ENCODE measurements at regions of chr14 and their contacts with region 1.

Region 1: GRCh38 chr14:56059054-56059453 is 59.2 kb upstream of the PELI2 start:
- DNase-seq: no peak
- H3K4me3 ChIP-seq: peak overlapping the region in 3 of 59 donors; percentile 4 to 14 (median 6)
- H3K27ac ChIP-seq: no peak overlapping the region
- H3K27me3 ChIP-seq: no peaks in the 10 kb centered on the region
- CTCF ChIP-seq: no peak

Region 2: DNA sequence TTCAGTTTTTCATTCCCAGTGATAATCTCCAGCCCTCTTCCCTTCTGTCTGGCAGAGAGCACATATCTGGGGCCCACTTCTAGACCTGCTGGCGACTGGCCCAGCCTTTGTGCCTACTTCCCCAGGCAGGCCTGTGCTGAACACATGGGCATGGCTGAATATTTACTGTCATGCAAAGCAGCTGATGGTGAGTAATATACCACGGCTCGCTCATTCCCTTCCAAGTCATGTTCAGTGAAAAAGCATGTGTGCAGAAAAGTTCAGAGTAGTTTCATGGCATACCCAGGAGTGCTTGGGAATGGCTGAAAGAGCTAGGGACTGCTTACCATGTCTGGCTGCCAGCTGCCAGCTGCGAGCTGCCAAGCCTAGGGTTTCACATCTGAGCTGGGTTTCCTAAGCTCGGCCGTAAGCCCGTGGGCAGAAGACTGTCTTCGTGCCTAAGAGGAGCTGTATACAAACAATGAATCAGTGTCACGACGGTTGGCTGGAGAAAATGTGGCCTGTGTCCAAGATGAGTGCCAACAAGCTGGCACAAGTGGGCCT is 120.7 kb before region 1 on chr14:
- intact Hi-C with region 1: loop called in 1 of 2 experiments (anchors 5 kb)
- DNase-seq: peak; percentile 48 to 82 (median 73)
- H3K4me3 ChIP-seq: no peak overlapping the region
- H3K27ac ChIP-seq: peak overlapping the region in 17 of 59 donors; percentile 1 to 55 (median 12)
- H3K27me3 ChIP-seq: no peaks in the 10 kb centered on the region
- CTCF ChIP-seq: peak in 1 of 56 donors; percentile 7

Region 3: GRCh38 chr14:55976219-55976618 is 82.8 kb before region 1 on chr14:
- intact Hi-C with region 1: loop called in 1 of 2 experiments (anchors 10 kb)
- DNase-seq: no peak
- H3K4me3 ChIP-seq: no peak overlapping the region
- H3K27ac ChIP-seq: no peak overlapping the region
- H3K27me3 ChIP-seq: no peaks in the 10 kb centered on the region
- CTCF ChIP-seq: no peak

Region 4: DNA sequence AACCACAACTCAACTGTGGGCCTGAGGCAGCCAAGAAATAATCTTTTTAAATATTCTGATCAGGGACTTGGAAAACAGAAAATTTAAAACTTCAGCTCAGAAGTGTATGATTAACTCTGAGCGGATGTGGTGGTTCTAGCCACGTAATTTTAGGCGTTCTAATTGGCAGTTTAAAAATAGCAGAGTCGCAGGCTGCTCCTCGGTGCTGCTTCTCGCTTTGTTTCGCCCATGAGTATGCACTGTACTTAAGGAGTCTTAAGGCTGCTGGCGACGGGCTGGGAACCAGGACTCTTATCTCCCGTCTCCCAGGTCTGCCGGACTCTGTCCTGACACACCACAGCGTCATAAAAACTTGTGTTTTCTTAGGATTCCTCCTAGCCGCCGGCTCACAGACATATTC is 54.3 kb before region 1 on chr14:
- intact Hi-C with region 1: no loop called
- DNase-seq: no peak
- H3K4me3 ChIP-seq: peak overlapping the region in 41 of 59 donors; percentile 3 to 50 (median 27)
- H3K27ac ChIP-seq: peak overlapping the region in 9 of 59 donors; percentile 0 to 57 (median 18)
- H3K27me3 ChIP-seq: no peaks in the 10 kb centered on the region
- CTCF ChIP-seq: no peak

Region 5: DNA sequence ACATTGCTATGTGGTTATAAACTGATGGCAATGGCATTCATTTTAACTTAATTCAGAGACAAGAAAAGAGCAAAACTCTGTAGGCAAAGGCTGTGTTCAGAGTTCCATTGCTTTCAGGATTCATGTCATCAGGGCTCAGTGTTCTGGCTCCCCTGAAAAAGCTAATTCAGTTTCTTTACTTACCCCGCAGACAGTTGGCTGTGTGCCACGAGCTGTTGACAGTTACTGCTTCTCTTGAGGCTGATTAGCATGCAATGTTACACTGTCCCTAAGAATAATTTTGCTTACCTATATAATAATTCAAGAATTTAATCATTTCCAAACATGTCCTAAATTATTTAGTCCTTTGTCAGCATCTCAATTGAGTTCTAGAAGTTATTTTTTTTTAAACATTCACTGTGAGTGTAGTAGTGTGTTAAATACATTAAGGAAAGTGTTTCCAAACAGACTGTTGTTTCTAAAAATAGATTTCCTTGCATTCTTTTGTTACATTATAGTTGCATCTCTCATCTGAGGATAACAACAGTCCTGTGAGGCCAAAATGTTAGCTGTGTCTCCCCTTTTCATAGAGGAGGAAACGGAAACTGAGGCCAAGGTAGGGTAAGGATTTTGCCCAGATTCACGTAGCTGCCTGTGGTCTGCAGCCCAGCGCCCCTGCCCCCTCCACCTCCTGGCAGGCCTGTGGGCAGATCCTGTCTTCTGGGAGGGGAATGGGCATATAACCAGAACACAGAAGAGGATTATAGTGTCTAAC is 157.7 kb after region 1 on chr14:
- intact Hi-C with region 1: loop called in 1 of 2 experiments (anchors 10 kb)
- DNase-seq: peak in 7 of 10 donors; percentile 42 to 84 (median 57)
- H3K4me3 ChIP-seq: peak overlapping the region in 1 of 59 donors; percentile 9
- H3K27ac ChIP-seq: peak overlapping the region in 27 of 59 donors; percentile 3 to 67 (median 28)
- H3K27me3 ChIP-seq: no peaks in the 10 kb centered on the region
- CTCF ChIP-seq: no peak